Testis (tissue), 5 donors: ENCODE measurements at regions of chr16 and their contacts with region 1.

Region 1: DNA sequence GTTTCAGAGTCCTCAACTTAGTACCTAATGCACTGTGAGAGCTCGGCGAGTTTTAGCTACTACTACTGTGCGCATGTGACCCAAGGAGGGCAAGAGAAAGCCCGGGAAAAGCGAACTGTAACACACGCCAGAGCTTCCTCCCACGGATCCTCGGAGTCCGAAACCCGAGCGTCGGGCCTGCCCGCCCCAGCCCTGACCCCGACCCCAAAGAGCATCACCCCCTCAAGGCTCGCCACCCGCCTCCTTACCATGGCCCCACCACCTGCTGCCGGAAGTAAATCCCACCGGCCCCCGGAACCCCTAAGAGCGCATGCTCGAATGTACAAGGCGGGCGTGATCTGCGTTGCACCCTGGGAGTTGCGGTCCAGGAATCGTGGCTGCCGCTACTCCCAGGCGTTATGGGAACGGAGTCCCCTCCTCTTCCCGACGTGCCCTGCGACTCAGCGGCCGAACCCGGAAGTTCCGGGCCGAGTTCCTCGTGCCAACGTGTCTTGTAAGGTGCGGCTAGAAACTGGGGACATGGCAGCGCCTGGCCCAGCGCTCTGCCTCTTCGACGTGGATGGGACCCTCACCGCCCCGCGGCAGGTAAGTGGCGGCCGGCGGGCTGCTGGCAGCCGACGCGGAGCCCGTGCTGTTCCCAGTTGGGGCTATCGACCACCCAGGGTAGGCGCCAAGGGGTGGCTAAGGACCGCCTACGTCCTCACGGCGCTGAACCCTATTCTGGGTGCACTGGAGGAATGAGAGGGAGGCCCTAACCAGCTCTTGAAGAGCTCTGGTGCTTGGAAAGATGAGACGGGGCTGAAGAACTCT is at the starts of genes PMM2 and TMEM186:
- DNase-seq: peak; percentile 99
- H3K4me3 ChIP-seq: peak within 1 kb of the TSS; percentile 86 to 95
- H3K27ac ChIP-seq: peak within 1 kb of the TSS; percentile 67 to 70
- H3K4me1 ChIP-seq: peaks cover 20% of the 10 kb centered on the region
- H3K27me3 ChIP-seq: no peaks in the 10 kb centered on the region
- CTCF ChIP-seq: peak in 2 of 3 experiments; percentile 13
- POLR2A ChIP-seq: no peak
- total RNA-seq, gene PMM2: 25.8 to 36.6 TPM
- total RNA-seq, gene TMEM186: 11.6 to 14.3 TPM

Region 2: GRCh38 chr16:8660841-8661301 is 136.7 kb before region 1 on chr16:
- intact Hi-C with region 1: loop called (anchors 10 kb)
- DNase-seq: peak; percentile 75
- H3K4me3 ChIP-seq: no peak overlapping the region
- H3K27ac ChIP-seq: no peak overlapping the region
- H3K4me1 ChIP-seq: no peaks in the 10 kb centered on the region
- H3K27me3 ChIP-seq: no peaks in the 10 kb centered on the region
- CTCF ChIP-seq: peak; percentile 50 to 71 (median 65)
- POLR2A ChIP-seq: no peak

Region 3: GRCh38 chr16:8943966-8944759 is 146.6 kb after region 1 on chr16:
- intact Hi-C with region 1: no loop called
- DNase-seq: no peak
- H3K4me3 ChIP-seq: no peak overlapping the region
- H3K27ac ChIP-seq: no peak overlapping the region
- H3K4me1 ChIP-seq: peaks cover 16% of the 10 kb centered on the region
- H3K27me3 ChIP-seq: no peaks in the 10 kb centered on the region
- CTCF ChIP-seq: no peak
- POLR2A ChIP-seq: no peak